B cell (primary cell): ENCODE measurements at regions of chr12 and their contacts with region 1.

Region 1: GRCh38 chr12:50400598-50401364 is at the start of gene LARP4:
- DNase-seq: peak; percentile 93
- ATAC-seq: peak; percentile 94
- H3K4me3 ChIP-seq: peak within 1 kb of the TSS; percentile 53 to 90 (median 81)
- H3K4me3 Mint-ChIP-seq: peak within 1 kb of the TSS; percentile 92
- H3K27ac ChIP-seq: peak within 1 kb of the TSS; percentile 62 to 88
- H3K27ac Mint-ChIP-seq: peak within 1 kb of the TSS; percentile 93
- H3K4me1 ChIP-seq: peaks cover 22 to 24% of the 10 kb centered on the region in 2 donors
- H3K4me1 Mint-ChIP-seq: peaks cover 38% of the 10 kb centered on the region
- H3K27me3 ChIP-seq: no peaks in the 10 kb centered on the region
- H3K27me3 Mint-ChIP-seq: peaks cover 9% of the 10 kb centered on the region
- CTCF ChIP-seq: no peak
- total RNA-seq, gene LARP4: 42.0 and 48.4 TPM in 2 replicates

Region 2: GRCh38 chr12:49828133-49829091 is 572.4 kb before region 1 on chr12 and contains the start of gene NCKAP5L:
- CTCF ChIA-PET with region 1: no interaction called
- POLR2A ChIA-PET with region 1: no interaction called
- intact Hi-C with region 1: loop called (anchors 2 kb)
- DNase-seq: peak; percentile 96
- ATAC-seq: peak; percentile 98
- H3K4me3 ChIP-seq: peak within 1 kb of the TSS; percentile 60 to 84 (median 73)
- H3K4me3 Mint-ChIP-seq: peak within 1 kb of the TSS; percentile 99
- H3K27ac ChIP-seq: peak within 1 kb of the TSS; percentile 36 to 75
- H3K27ac Mint-ChIP-seq: peak within 1 kb of the TSS; percentile 97
- H3K4me1 ChIP-seq: peaks cover 26% of the 10 kb centered on the region in 2 donors
- H3K4me1 Mint-ChIP-seq: peaks cover 39% of the 10 kb centered on the region
- H3K27me3 ChIP-seq: no peaks in the 10 kb centered on the region
- H3K27me3 Mint-ChIP-seq: no peaks in the 10 kb centered on the region
- CTCF ChIP-seq: no peak
- total RNA-seq, gene NCKAP5L: 13.2 and 13.4 TPM in 2 replicates

Region 3: DNA sequence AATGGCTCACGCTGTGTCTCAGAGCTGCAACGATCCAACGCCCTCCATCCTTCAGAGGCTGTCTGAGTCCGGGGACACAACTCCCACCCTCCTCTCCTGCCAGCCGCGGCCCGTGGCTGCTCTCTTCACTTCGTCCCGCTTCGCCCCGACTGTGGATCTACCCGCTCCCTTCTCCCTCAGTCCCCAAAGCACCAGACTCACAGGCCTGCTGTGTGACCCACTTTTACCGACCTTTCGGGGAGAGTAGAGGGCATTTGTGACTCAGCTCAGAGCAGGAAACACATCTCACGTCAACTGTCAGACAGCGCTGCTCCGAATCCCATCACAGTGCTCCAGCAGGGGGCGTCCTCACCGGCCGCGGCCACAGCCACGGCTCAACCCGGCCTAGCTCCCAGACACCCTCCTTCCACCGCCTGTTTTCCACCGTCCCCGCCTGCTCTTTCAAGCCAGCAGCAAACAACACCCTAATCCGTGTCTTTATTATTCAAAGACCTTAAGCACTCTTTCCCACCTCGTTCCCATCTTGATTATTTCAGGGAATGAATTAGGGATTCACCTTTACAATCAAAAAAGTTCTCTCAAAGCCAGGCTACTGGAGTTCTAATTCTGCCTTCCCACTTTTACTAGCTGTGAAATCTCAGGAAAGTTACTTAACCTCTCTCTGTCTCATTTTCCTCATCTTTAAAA is 455.2 kb before region 1 on chr12:
- CTCF ChIA-PET with region 1: no interaction called
- POLR2A ChIA-PET with region 1: no interaction called
- intact Hi-C with region 1: no loop called
- DNase-seq: peak; percentile 80
- ATAC-seq: peak; percentile 90
- H3K4me3 ChIP-seq: peak overlapping the region in 4 of 5 experiments; percentile 18 to 48 (median 40)
- H3K4me3 Mint-ChIP-seq: peak overlapping the region; percentile 83
- H3K27ac ChIP-seq: no peak overlapping the region
- H3K27ac Mint-ChIP-seq: no peak overlapping the region
- H3K4me1 ChIP-seq: peaks cover 0 to 8% of the 10 kb centered on the region in 2 donors
- H3K4me1 Mint-ChIP-seq: peaks cover 15% of the 10 kb centered on the region
- H3K27me3 ChIP-seq: peaks cover 0 to 9% (median 4%) of the 10 kb centered on the region in 4 experiments
- H3K27me3 Mint-ChIP-seq: peaks cover 9% of the 10 kb centered on the region
- CTCF ChIP-seq: peak; percentile 89